ENCODE measurements at regions of chr11 and their contacts with region 1.

Region 1: DNA sequence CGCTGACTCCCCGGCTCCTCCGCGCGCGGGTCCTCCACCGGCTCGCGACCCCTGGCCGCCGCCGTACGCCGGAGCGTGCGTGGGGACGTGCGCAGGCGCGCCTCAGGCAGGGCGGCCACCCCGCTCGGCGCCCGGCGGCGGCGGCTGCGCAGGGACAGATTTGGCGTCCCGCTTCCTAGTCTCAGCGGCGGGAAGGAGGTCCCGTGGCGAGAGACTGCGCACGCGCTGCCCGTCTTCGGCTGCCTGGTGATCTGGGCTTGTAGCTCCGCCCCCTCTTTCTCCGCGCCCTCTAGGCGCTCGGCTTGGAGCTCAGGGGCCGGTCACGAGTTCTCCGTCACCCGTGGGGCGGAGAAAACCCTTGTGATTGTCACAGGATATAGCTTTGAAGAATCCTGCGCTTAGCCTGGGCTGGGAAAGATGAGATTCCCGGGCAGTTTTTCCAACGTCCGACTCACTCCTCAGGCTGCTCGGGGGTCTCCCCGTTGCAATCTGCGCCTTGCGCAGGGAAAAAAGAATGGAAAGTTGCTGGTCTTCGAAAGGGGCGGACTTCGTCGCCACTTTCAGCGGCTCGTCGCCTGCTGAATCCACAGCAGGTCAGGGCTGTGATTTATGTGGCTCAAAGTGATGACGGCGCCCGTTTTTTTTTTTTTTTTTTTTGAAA is at the start of gene PATL1:
- DNase-seq: peak; percentile 99
- H3K4me3 Mint-ChIP-seq: peak within 1 kb of the TSS; percentile 97
- H3K27ac Mint-ChIP-seq: peak within 1 kb of the TSS; percentile 98
- H3K4me1 Mint-ChIP-seq: peaks cover 36% of the 10 kb centered on the region
- H3K27me3 Mint-ChIP-seq: no peaks in the 10 kb centered on the region
- total RNA-seq, gene PATL1: 69.0 and 71.2 TPM in 2 replicates

Region 2: DNA sequence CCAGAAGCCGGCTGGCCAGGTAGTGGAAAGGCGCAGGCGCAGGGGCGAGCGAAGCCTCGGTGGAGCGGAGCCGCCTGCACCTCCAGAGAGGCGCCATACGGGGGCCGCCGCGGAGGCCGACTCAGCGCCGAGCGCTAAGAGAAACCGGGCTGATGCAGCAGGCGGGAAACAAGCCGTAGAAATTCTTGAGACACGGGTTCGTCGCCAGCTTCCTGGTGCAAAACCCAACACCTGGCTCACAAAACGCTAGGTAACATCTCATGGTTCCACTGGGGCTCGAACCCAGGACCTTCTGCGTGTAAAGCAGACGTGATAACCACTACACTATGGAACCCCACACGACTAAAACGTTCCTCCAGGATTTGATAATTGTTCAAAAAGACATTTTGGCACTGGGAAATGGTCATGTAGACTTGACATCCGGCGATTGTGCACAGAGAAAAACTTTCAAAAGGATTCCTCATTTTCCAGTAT is 118.7 kb before region 1 on chr11:
- intact Hi-C with region 1: loop called (anchors 1 kb)
- DNase-seq: peak; percentile 84
- H3K4me3 Mint-ChIP-seq: peak overlapping the region; percentile 89
- H3K27ac Mint-ChIP-seq: peak overlapping the region; percentile 94
- H3K4me1 Mint-ChIP-seq: peaks cover 24% of the 10 kb centered on the region
- H3K27me3 Mint-ChIP-seq: peaks cover 4% of the 10 kb centered on the region

Region 3: DNA sequence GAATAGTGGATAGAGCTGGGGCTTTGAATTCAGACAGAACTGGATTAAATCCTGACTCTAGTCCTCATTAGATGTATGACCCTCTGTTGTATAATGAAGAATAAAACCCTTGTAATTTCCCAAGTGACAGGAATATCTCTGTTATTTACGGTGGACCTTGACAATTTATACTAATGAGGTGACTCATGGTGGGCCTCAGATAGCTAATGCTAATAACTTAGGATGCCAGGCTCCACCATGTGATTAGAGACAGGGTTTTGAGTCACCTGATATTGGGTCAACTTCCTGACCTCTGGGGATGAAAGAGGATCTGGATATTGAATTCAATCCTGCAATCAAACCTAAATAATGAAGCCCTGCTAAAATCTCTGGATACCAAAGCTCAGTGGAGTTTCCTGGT is 87.1 kb before region 1 on chr11:
- intact Hi-C with region 1: no loop called
- DNase-seq: no peak
- H3K4me3 Mint-ChIP-seq: no peak overlapping the region
- H3K27ac Mint-ChIP-seq: no peak overlapping the region
- H3K4me1 Mint-ChIP-seq: peaks cover 1% of the 10 kb centered on the region
- H3K27me3 Mint-ChIP-seq: no peaks in the 10 kb centered on the region

Region 4: GRCh38 chr11:59630493-59630892 is 38.6 kb before region 1 on chr11:
- intact Hi-C with region 1: no loop called
- DNase-seq: no peak
- H3K4me3 Mint-ChIP-seq: no peak overlapping the region
- H3K27ac Mint-ChIP-seq: no peak overlapping the region
- H3K4me1 Mint-ChIP-seq: no peaks in the 10 kb centered on the region
- H3K27me3 Mint-ChIP-seq: no peaks in the 10 kb centered on the region

Region 5: GRCh38 chr11:59641156-59641555 is 27.9 kb before region 1 on chr11:
- intact Hi-C with region 1: no loop called
- DNase-seq: no peak
- H3K4me3 Mint-ChIP-seq: no peak overlapping the region
- H3K27ac Mint-ChIP-seq: no peak overlapping the region
- H3K4me1 Mint-ChIP-seq: no peaks in the 10 kb centered on the region
- H3K27me3 Mint-ChIP-seq: no peaks in the 10 kb centered on the region

Region 6: DNA sequence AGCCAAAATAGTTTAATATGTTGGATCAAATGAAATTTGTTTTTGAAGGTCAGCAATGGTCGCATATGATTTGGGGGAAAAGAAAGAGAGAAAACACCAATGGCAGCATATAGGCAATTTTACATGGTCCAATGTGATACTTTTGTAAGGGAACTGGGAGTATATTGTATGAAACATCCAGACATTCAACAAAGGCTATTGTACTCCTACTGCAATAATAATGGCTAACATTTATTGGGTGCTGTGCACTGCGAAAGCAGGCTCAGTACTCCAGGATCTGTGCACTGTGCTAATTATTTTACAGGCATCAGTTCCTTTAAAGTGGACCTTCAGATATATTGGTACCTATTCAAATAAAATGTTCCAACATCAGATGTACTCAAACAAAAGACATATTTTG is 50.5 kb after region 1 on chr11:
- intact Hi-C with region 1: no loop called
- DNase-seq: no peak
- H3K4me3 Mint-ChIP-seq: no peak overlapping the region
- H3K27ac Mint-ChIP-seq: no peak overlapping the region
- H3K4me1 Mint-ChIP-seq: no peaks in the 10 kb centered on the region
- H3K27me3 Mint-ChIP-seq: peaks cover 26% of the 10 kb centered on the region

Region 7: DNA sequence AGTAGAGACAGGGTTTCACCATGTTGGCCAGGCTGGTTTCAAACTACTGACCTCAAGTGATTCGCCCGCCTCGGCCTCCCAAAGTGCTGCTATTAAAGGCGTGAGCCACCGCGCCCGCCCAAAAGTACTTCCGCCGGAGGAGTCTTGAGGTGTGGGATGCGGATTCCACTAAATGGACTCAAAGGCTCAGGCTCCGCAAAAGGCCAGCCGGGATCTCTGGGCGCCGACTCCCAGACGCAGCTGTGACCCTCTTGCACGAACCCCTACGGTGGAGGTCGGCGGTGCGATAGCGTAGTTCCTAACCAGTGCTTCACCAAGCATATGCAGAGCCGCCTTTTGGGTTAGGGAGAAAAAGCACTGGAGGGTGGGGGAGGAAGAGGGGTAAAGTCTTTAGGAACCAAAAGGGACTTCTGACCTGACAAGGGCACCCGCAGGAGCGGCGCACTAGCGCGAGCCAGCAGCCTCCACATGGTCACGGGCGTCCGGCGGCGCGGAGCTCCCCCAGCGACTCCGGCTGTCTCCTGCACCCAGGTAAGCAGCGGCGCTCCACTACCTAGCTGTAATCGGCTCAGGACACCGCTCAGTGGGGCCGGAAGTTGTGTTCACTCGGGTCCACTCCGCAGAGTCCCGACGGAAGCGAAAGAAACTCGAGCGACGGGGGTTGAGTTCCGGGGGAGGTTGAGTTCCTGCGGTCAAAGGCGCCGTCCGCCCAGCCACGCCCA is 141.3 kb after region 1 on chr11 and contains the start of gene MRPL16:
- intact Hi-C with region 1: loop called (anchors 1 kb)
- DNase-seq: peak; percentile 85
- H3K4me3 Mint-ChIP-seq: peak within 1 kb of the TSS; percentile 94
- H3K27ac Mint-ChIP-seq: peak within 1 kb of the TSS; percentile 84
- H3K4me1 Mint-ChIP-seq: peaks cover 22% of the 10 kb centered on the region
- H3K27me3 Mint-ChIP-seq: no peaks in the 10 kb centered on the region
- total RNA-seq, gene MRPL16: 87.7 and 90.4 TPM in 2 replicates

Region 8: GRCh38 chr11:59857444-59858434 is 188.7 kb after region 1 on chr11:
- intact Hi-C with region 1: loop called (anchors 2 kb)
- DNase-seq: peak; percentile 11
- H3K4me3 Mint-ChIP-seq: peak overlapping the region; percentile 19
- H3K27ac Mint-ChIP-seq: peak overlapping the region; percentile 95
- H3K4me1 Mint-ChIP-seq: peaks cover 41% of the 10 kb centered on the region
- H3K27me3 Mint-ChIP-seq: no peaks in the 10 kb centered on the region